ENCODE measurements at regions of chr6 and their contacts with region 1.

Region 1: GRCh38 chr6:6845603-6846002 is 257.1 kb downstream of the LY86 start:
- DNase-seq: no peak
- ATAC-seq: no peak
- H3K4me3 ChIP-seq: no peak overlapping the region
- H3K4me3 Mint-ChIP-seq: no peak overlapping the region
- H3K27ac ChIP-seq: no peak overlapping the region
- H3K27ac Mint-ChIP-seq: no peak overlapping the region
- H3K4me1 ChIP-seq: no peaks in the 10 kb centered on the region
- H3K4me1 Mint-ChIP-seq: no peaks in the 10 kb centered on the region
- H3K27me3 ChIP-seq: peaks cover 0 to 25% of the 10 kb centered on the region in 2 experiments
- H3K27me3 Mint-ChIP-seq: peaks cover 7 to 9% of the 10 kb centered on the region in 2 donors

Region 2: DNA sequence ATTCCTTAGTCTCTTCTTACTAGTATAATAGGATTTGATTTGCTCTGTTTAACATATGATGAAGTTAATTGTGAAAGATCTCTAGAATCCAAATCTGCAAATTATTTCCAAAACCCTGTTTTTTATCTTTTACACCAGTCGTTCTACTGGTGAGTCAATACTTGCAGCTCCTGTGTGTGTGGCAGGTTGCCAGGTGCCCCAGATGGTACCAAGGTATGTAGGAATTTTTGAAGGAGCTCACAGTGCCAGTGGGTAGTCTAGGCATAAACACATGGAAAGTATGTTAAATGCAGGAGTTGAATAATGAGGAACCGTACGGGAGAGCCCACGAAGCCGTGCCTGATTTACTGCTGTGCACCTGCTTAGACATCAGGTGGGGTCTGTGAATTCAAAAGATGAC is 1392.1 kb before region 1 on chr6:
- CTCF ChIA-PET with region 1: interaction called in 1 of 2 experiments, 10 read pairs
- POLR2A ChIA-PET with region 1: no interaction called
- DNase-seq: no peak
- ATAC-seq: no peak
- H3K4me3 ChIP-seq: no peak overlapping the region
- H3K4me3 Mint-ChIP-seq: no peak overlapping the region
- H3K27ac ChIP-seq: no peak overlapping the region
- H3K27ac Mint-ChIP-seq: no peak overlapping the region
- H3K4me1 ChIP-seq: no peaks in the 10 kb centered on the region
- H3K4me1 Mint-ChIP-seq: peaks cover 3 to 10% (median 8%) of the 10 kb centered on the region in 3 donors
- H3K27me3 ChIP-seq: no peaks in the 10 kb centered on the region
- H3K27me3 Mint-ChIP-seq: no peaks in the 10 kb centered on the region

Region 3: DNA sequence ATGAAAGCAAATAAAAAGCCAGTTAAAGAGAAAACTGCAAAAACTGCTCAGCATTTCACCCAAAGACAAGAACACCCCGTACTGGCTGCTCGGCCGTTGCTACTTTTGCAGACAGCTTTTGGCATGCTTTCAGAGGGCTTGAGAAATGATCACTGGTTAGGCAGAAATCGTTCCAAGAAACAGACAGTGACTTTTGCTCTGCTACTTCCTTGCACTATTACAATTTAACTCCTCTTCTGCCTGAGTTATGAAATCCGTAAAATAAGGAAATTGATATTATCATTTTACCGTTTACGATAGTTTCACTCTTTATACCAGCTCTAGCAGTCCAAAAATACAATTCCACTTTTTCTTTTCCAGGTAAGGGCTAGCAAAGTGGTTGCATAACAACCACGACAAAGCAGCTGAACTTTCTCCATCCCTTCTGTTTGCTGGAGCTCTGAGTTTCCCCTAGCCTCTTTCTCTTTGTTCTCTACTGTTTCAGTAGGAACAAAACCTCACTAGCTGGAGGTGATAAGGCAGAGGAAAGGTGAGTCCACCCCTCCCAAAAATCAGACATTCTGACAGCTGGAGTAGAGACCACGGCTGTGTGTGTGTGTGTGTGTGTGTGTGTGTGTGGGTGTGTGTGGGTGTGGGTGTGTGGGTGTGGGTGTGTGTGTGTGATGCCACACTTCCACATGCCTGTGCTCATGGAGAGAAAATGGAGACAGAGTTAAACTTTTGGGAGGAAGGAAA is 70.4 kb after region 1 on chr6:
- CTCF ChIA-PET with region 1: no interaction called
- POLR2A ChIA-PET with region 1: no interaction called
- DNase-seq: no peak
- ATAC-seq: peak in 1 of 4 experiments; percentile 26
- H3K4me3 ChIP-seq: no peak overlapping the region
- H3K4me3 Mint-ChIP-seq: peak overlapping the region; percentile 29 to 59 (median 31)
- H3K27ac ChIP-seq: no peak overlapping the region
- H3K27ac Mint-ChIP-seq: peak overlapping the region in 1 of 2 donors; percentile 14
- H3K4me1 ChIP-seq: peaks cover 2 to 8% of the 10 kb centered on the region in 2 experiments
- H3K4me1 Mint-ChIP-seq: peaks cover 13 to 16% (median 13%) of the 10 kb centered on the region in 3 donors
- H3K27me3 ChIP-seq: peaks cover 0 to 17% of the 10 kb centered on the region in 2 experiments
- H3K27me3 Mint-ChIP-seq: peaks cover 0 to 3% of the 10 kb centered on the region in 2 donors